SK-N-SH (cell line): ENCODE measurements at regions of chr5 and their contacts with region 1.

Region 1: DNA sequence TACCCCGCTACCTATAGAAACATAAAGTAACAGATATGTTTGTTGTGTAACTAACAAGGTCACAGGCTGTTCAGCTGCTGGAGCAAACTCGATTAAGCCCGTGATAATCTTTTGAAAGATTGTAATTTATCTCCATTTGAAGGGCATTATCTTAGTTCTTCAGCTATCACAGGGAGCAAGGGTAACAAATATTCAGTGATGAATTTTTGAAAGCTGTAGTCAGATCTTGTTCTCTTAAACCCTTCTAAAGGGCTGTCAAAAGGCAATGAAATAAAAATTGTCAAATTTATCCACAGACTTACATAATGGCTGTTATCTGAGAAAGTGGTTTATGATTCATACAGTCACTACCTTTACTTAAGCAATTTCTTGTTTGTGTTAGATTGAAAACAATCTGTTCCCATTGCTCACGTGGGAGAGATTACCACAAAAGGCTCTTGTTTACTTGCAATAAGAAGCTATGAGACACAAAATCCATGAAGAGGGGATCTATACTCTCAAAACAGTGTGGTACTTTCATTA is 78.3 kb upstream of the ZNF608 start:
- DNase-seq: peak; percentile 46
- H3K4me3 ChIP-seq: no peak overlapping the region
- H3K27ac ChIP-seq: no peak overlapping the region
- H3K4me1 ChIP-seq: peaks cover 0 to 15% of the 10 kb centered on the region in 2 experiments; a peak in 2 of 4 replicates
- H3K27me3 ChIP-seq: no peaks in the 10 kb centered on the region
- CTCF ChIP-seq: no peak
- EP300 ChIP-seq: peak; percentile 25 to 86; a peak in 2 of 4 replicates
- RAD21 ChIP-seq: peak; percentile 32; the same call in 1 of the 2 replicates

Region 2: DNA sequence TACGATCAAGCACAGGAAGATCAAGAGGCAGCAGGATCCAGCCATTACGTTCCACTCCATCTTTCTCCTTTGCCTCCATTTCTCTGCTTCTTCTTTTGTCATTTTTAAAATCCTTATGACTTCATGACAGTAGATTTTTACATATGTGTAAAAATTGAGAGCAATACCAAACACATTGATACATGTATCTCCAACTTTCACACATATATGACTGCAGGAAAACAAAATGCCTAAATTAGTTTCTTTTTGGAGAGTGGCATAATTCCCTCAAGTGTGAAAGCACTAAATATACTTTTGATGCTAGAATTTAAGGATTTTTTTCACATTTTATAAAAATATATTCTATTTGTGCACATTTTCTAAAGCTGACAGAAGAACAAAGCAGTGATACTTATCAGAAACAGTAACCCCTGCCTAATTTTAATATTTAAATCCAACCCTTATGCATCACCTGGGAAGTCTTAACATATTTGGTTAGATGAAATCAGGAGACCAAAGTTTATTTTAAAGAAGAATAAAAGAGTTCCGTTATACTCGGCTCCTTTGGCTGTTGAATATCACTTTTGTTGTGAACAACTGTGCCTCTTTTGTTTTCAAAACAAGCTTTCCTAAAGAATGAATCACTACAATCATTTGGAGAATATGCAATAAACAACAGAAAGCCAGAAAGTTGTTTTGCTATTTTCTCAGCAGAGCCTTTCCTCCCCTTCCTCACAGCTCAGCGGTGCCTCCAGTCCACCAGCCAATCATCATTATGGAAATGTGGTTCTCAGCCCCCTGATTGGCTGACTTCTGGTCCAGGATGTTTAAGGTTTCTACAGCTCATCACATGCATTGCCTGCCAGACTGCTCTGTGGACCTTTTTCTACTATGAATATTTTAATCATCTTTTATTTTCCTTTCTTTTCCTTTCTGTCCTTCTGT is 69.4 kb before region 1 on chr5:
- CTCF ChIA-PET with region 1: no interaction called
- POLR2A ChIA-PET with region 1: no interaction called
- DNase-seq: peak; percentile 73
- H3K4me3 ChIP-seq: no peak overlapping the region
- H3K27ac ChIP-seq: no peak overlapping the region
- H3K4me1 ChIP-seq: peaks cover 0 to 3% of the 10 kb centered on the region in 2 experiments; a peak in 1 of 4 replicates
- H3K27me3 ChIP-seq: no peaks in the 10 kb centered on the region
- CTCF ChIP-seq: no peak
- EP300 ChIP-seq: no peak
- RAD21 ChIP-seq: no peak

Region 3: GRCh38 chr5:124806373-124807077 is 18.2 kb before region 1 on chr5:
- CTCF ChIA-PET with region 1: interaction called, 10 read pairs
- POLR2A ChIA-PET with region 1: no interaction called
- DNase-seq: peak; percentile 78
- H3K4me3 ChIP-seq: no peak overlapping the region
- H3K27ac ChIP-seq: peak overlapping the region in 1 of 2 experiments; percentile 89; a peak in 2 of 4 replicates
- H3K4me1 ChIP-seq: peaks cover 0 to 13% of the 10 kb centered on the region in 2 experiments; a peak in 2 of 4 replicates
- H3K27me3 ChIP-seq: no peaks in the 10 kb centered on the region
- CTCF ChIP-seq: no peak
- EP300 ChIP-seq: peak in 1 of 2 experiments; percentile 15; a peak in 1 of 4 replicates
- RAD21 ChIP-seq: peak; percentile 39

Region 4: DNA sequence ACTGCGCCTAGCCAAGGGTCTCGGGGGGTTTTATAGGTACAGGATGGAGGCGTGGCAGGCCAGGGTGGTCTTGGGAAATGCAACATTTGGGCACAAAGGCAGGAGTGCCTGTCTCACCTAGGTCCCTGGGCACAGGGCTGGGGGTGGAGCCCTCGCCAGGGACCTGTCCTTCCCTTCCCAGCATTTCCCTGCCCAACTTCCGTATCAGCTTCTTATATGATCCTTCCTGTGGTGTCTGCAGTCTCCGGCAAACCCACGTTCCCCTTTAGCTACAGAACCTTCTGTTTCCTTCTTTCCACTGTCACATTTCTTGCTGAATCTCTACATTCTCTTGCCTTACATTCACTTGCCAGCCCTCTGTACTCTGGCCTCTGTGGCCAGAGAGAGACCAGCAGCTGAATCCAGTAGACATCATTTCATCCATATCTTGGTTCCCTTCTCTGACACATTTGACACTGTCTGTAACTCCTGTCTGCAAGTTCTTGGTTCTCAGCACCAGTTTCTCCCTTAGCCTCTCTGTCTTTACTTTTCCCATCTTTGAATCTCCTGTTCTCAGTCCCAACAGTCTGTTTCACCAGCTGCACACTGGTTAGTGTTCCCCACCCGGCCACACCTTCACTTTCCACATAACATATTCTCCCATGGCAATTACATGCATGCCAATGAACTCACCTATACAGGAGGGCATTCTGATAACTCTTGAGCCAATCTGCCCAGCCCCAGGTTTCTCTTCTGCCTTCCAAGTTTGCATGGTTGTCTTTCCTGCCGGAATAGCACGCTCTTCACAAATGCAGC is 56.4 kb after region 1 on chr5:
- CTCF ChIA-PET with region 1: no interaction called
- POLR2A ChIA-PET with region 1: no interaction called
- DNase-seq: no peak
- H3K4me3 ChIP-seq: no peak overlapping the region
- H3K27ac ChIP-seq: no peak overlapping the region
- H3K4me1 ChIP-seq: no peaks in the 10 kb centered on the region
- H3K27me3 ChIP-seq: no peaks in the 10 kb centered on the region
- CTCF ChIP-seq: no peak
- EP300 ChIP-seq: no peak
- RAD21 ChIP-seq: no peak